AG04450 (cell line): ENCODE measurements at regions of chr21 and their contacts with region 1.

Region 1: GRCh38 chr21:32554832-32555436 is 30.4 kb downstream of the TCP10L start:
- DNase-seq: no peak
- H3K4me3 ChIP-seq: no peak overlapping the region
- H3K27ac ChIP-seq: peak overlapping the region; percentile 34
- H3K27me3 ChIP-seq: no peaks in the 10 kb centered on the region
- CTCF ChIP-seq: no peak

Region 2: DNA sequence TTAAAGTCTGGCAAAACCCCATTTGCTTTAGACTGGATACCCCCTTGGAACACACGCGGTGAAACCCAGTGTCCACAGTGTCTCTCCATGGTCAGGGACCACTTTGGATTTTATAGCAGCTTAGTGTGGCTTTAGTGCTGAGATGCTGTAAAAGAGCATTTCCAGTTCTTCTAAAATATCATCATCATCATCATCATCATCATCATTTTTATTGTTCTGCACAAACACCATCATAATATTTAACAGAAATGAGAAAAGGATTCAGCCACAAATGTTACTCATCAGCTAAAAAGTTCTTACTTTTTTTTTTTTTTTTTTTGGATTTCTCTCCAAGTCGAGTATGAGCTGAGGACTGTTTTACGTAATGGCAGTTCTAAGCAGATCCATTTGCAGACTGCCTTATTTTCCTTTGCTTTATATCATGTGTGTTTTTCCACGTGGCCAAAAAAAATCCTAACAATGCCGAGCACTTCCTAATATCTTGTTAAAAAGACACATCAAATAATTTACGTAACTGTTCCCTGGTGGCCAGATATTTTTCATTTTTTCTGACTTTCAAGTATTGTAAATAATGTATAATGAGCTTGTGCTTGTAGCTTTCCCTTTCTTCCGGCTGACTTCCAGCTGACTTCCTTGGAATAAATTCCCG is 79.6 kb before region 1 on chr21:
- CTCF ChIA-PET with region 1: no interaction called
- POLR2A ChIA-PET with region 1: interaction called, 10 read pairs
- DNase-seq: no peak
- H3K4me3 ChIP-seq: no peak overlapping the region
- H3K27ac ChIP-seq: peak overlapping the region; percentile 11
- H3K27me3 ChIP-seq: no peaks in the 10 kb centered on the region
- CTCF ChIP-seq: no peak

Region 3: GRCh38 chr21:32520875-32521735 is 33.8 kb before region 1 on chr21:
- CTCF ChIA-PET with region 1: no interaction called
- POLR2A ChIA-PET with region 1: no interaction called
- DNase-seq: peak; percentile 91
- H3K4me3 ChIP-seq: peak overlapping the region; percentile 15; the same call in 1 of the 2 replicates
- H3K27ac ChIP-seq: peak overlapping the region; percentile 94
- H3K27me3 ChIP-seq: no peaks in the 10 kb centered on the region
- CTCF ChIP-seq: no peak